ENCODE measurements at regions of chr19 and their contacts with region 1.

Region 1: DNA sequence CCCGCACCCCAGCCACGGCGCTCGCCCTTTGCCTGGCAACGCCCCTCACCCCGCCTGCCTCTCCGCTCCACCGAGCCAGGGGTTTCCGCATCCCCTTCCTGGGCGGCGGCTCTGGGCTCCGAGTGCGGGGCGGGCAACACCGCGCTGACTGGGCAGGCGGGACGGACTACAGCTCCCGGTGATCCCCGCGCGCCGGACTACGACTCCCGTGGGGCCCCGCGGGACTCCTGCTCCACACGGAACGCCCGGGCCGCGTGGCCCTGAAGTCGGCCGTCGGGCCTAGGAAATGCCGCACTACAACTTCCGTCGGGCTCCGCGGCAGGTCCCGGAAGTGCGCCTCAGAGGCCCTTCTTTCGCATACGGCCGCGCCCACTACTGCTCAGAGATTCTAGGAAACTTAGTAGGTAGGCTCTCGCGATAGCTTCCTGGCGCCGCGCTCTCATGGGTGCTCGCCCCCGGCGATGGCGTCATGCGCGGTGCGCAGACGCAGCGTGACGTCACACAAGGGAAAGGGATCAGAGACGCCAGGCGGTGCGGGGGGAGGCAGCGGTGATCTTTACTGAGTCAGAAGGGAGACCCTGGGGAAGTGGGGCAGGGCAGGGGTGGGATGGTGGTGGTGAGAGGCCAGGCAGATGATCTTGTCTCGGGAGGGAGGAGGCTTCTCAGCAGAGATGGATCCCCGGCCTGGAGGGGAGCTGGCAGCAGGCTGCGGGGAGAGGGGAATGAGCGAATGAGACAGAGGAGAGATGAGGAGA is at the start of gene JOSD2:
- DNase-seq: peak; percentile 96
- ATAC-seq: peak; percentile 89
- H3K4me3 Mint-ChIP-seq: peak within 1 kb of the TSS; percentile 82
- H3K27ac Mint-ChIP-seq: peak within 1 kb of the TSS; percentile 95
- H3K4me1 Mint-ChIP-seq: peaks cover 14% of the 10 kb centered on the region
- H3K27me3 Mint-ChIP-seq: peaks cover 45% of the 10 kb centered on the region
- CTCF ChIP-seq: no peak
- total RNA-seq, gene JOSD2: 4.0 to 4.3 TPM (median 4.0 TPM) in 3 replicates

Region 2: DNA sequence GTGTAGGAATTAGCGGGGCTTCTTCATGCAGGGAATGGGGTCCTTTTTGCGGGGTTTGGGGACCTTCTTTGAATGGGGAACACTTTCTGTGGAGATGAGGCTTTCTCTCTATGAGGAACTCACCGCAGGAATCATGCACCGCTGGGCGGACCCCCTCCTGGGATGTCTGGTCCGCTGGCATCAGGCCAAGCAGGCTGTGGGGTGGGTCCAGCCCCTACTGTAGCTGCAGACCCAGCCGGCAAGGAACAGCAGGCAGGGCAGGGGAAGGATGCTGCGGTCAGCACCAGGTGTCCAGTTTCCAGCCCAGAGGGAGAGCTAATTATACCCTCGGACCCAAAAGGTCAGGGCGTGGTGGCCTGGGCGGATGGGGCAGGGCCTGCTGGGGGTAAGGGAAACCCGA is 76.7 kb before region 1 on chr19:
- CTCF ChIA-PET with region 1: no interaction called
- POLR2A ChIA-PET with region 1: no interaction called
- DNase-seq: no peak
- ATAC-seq: no peak
- H3K4me3 Mint-ChIP-seq: peak overlapping the region; percentile 24; the same call in 1 of the 2 replicates
- H3K27ac Mint-ChIP-seq: no peak overlapping the region
- H3K4me1 Mint-ChIP-seq: peaks cover 25% of the 10 kb centered on the region
- H3K27me3 Mint-ChIP-seq: peaks cover 31% of the 10 kb centered on the region
- CTCF ChIP-seq: no peak

Region 3: DNA sequence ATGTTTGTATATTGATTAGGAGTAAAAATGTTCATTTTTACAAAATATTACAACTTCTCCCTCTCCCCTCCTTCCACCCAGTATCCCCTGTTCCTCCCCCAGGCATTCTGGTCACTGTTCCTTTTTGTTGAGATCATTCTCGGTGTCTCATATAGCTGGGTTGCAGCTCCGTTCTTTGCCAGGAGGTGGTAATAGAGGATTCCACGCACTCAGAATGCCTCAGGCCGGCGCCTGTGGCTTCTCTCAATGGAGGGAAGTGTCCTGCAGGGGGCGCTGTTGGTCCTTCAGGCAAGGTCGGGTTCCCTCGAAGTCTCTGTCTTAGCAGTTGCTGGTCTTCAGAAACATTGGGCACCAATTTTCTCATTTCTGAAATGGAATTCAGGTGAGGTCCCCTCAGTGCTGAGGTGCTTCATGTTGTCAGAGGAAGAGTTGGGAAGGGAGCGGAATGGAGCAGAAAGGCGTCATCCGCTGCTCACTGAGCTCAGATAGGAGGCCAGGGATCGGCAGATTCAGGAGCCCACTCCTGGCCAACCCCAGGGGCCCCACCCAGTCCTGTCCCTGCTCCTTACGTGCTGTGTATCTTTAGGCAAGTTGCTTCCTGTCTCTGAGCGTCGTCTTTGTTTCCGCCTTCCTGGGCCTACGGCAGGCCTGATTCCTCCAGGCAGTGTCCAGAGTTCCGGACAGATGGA is 24.3 kb before region 1 on chr19:
- CTCF ChIA-PET with region 1: interaction called, 18 read pairs
- POLR2A ChIA-PET with region 1: no interaction called
- DNase-seq: peak; percentile 93
- ATAC-seq: peak; percentile 60
- H3K4me3 Mint-ChIP-seq: no peak overlapping the region
- H3K27ac Mint-ChIP-seq: no peak overlapping the region
- H3K4me1 Mint-ChIP-seq: peaks cover 35% of the 10 kb centered on the region
- H3K27me3 Mint-ChIP-seq: peaks cover 71% of the 10 kb centered on the region
- CTCF ChIP-seq: peak; percentile 93

Region 4: DNA sequence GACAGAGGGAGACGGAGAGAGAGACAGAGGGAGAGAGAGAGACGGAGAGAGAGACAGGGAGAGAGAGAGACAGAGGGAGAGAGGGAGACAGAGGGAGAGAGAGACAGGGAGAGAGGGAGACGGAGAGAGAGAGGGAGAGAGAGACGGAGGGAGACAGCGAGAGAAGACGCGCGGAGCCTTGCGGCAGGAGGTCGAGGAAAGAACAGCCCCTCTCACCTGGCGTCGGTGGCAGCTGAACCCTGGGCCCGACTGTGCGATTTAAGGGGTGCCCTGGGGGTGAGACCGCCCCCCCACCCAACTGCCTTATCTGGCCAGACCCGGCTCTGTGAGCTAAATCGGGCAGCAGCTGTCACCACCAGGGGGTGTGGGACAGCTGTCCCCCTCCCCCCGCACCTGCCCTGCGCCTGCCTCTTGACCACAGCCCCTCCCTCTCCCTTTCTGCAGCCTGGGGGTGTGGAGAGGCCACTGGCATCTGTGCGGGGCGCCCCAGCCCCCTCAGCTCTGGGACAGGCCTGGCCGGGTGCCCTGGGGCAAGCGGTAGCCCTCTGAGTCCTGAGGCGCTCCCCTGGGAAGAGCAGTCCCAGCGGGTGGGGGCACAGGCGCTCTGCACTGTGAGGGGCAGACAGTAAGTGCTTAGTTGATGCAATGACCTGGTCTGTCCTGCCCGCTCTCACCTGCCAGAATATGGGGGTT is 11.0 kb before region 1 on chr19:
- CTCF ChIA-PET with region 1: interaction called, 12 read pairs
- POLR2A ChIA-PET with region 1: interaction called, 3 read pairs
- DNase-seq: peak; percentile 44
- ATAC-seq: peak; percentile 54
- H3K4me3 Mint-ChIP-seq: no peak overlapping the region
- H3K27ac Mint-ChIP-seq: no peak overlapping the region
- H3K4me1 Mint-ChIP-seq: peaks cover 3% of the 10 kb centered on the region; the same call in 1 of the 2 replicates
- H3K27me3 Mint-ChIP-seq: peaks cover 28% of the 10 kb centered on the region
- CTCF ChIP-seq: no peak

Region 5: GRCh38 chr19:50590191-50590590 is 78.9 kb after region 1 on chr19:
- CTCF ChIA-PET with region 1: no interaction called
- POLR2A ChIA-PET with region 1: no interaction called
- DNase-seq: no peak
- ATAC-seq: no peak
- H3K4me3 Mint-ChIP-seq: no peak overlapping the region
- H3K27ac Mint-ChIP-seq: no peak overlapping the region
- H3K4me1 Mint-ChIP-seq: peaks cover 11% of the 10 kb centered on the region
- H3K27me3 Mint-ChIP-seq: peaks cover 35% of the 10 kb centered on the region
- CTCF ChIP-seq: no peak

Measured in WTC11 (cell line).